Mammary epithelial cell (primary cell): ENCODE measurements at regions of chr12 and their contacts with region 1.

Region 1: DNA sequence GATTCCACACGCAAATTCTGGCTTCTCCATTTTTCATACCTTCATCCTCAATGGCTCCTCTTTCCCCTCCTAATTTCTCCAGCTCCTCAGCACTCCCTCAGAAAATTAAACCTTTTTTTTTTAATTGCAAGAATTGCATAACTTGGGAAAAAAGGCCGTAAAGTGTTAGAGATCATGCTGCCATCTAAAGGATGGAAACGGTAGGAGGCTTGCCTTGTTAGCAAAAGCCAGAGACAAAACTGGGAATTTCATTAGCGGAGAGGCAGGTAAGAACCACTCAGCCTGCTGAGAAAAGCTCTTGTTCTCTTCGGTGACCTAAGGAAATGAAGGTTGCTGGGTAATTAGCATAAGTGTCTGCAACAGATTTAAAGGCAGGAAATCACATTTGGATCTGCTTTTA is 204.3 kb downstream of the AEBP2 start:
- DNase-seq: peak; percentile 48
- H3K4me3 ChIP-seq: no peak overlapping the region
- H3K27ac ChIP-seq: no peak overlapping the region
- H3K4me1 ChIP-seq: no peaks in the 10 kb centered on the region
- H3K27me3 ChIP-seq: no peaks in the 10 kb centered on the region
- CTCF ChIP-seq: peak; percentile 57 to 73

Region 2: GRCh38 chr12:19507823-19508222 is 135.8 kb before region 1 on chr12:
- CTCF ChIA-PET with region 1: no interaction called
- dilution Hi-C with region 1: no loop called
- in situ Hi-C with region 1: no loop called
- intact Hi-C with region 1: loop called (anchors 1 kb)
- DNase-seq: peak; percentile 16
- H3K4me3 ChIP-seq: no peak overlapping the region
- H3K27ac ChIP-seq: no peak overlapping the region
- H3K4me1 ChIP-seq: peaks cover 15% of the 10 kb centered on the region
- H3K27me3 ChIP-seq: no peaks in the 10 kb centered on the region
- CTCF ChIP-seq: peak in 1 of 2 donors; percentile 31

Region 3: GRCh38 chr12:19572920-19573558 is 70.6 kb before region 1 on chr12:
- CTCF ChIA-PET with region 1: no interaction called
- dilution Hi-C with region 1: no loop called
- in situ Hi-C with region 1: no loop called
- intact Hi-C with region 1: loop called (anchors 2 kb)
- DNase-seq: peak; percentile 49
- H3K4me3 ChIP-seq: no peak overlapping the region
- H3K27ac ChIP-seq: no peak overlapping the region
- H3K4me1 ChIP-seq: peaks cover 6% of the 10 kb centered on the region
- H3K27me3 ChIP-seq: no peaks in the 10 kb centered on the region
- CTCF ChIP-seq: peak; percentile 52 to 69

Region 4: DNA sequence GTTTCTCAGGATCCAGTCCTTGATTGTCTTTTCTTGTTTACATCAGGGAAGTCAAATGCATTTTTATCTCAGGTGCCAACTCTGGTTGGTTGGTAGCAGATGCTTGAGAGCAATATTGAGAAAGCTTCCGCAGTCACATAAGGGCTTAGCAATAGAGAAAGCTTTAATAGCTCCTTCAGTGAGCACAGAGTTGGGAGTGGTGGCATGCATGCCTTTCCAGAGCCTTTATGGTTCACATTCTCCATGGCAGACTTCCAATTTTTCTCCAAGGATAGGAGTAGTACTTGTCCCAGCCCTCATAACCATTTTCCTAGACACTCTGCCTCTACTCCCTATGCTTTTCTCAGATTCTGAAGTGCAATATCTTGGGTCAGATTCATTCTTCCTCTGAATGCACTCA is 76.0 kb after region 1 on chr12:
- CTCF ChIA-PET with region 1: no interaction called
- dilution Hi-C with region 1: no loop called
- in situ Hi-C with region 1: no loop called
- intact Hi-C with region 1: no loop called
- DNase-seq: no peak
- H3K4me3 ChIP-seq: no peak overlapping the region
- H3K27ac ChIP-seq: no peak overlapping the region
- H3K4me1 ChIP-seq: no peaks in the 10 kb centered on the region
- H3K27me3 ChIP-seq: peaks cover 3% of the 10 kb centered on the region
- CTCF ChIP-seq: no peak